ENCODE measurements at regions of chr22 and their contacts with region 1.

Region 1: DNA sequence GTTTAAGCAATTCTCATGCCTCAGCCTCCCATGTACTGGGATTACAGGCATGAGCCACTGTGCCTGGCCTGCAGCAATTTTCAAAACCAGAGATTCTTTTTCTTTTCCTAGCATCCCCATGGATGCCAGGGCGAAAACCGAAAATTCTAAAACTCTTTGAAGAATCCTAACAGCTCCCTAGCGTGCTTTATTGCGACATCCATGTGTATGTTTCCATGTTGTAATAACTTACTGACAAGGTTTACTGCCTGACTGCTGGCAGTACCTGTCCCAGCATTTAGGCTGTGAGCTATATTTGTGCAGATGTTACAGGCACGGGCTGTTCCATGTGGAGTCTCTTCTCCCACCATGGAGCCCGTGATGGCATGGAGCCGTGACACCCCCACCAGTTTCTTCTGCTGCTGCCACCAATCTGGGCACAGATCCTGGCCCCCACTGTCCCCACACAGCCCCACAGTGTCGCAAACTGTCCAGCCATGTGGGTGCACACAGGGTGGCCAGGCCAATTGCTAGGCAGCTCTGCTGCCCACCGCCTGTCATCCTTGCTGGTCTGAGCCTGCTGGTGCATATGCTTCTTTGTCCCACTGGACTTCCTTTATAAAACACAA is 7.1 kb upstream of the TAB1 start:
- DNase-seq: no peak
- H3K4me3 ChIP-seq: no peak overlapping the region
- H3K27ac ChIP-seq: no peak overlapping the region
- H3K4me1 ChIP-seq: peaks cover 9% of the 10 kb centered on the region
- H3K27me3 ChIP-seq: no peaks in the 10 kb centered on the region
- CTCF ChIP-seq: no peak
- POLR2A ChIP-seq: no peak

Region 2: GRCh38 chr22:39117585-39118191 is 274.8 kb before region 1 on chr22:
- intact Hi-C with region 1: no loop called
- DNase-seq: no peak
- H3K4me3 ChIP-seq: no peak overlapping the region
- H3K27ac ChIP-seq: no peak overlapping the region
- H3K4me1 ChIP-seq: no peaks in the 10 kb centered on the region
- H3K27me3 ChIP-seq: no peaks in the 10 kb centered on the region
- CTCF ChIP-seq: peak in 1 of 3 experiments; percentile 41
- POLR2A ChIP-seq: no peak

Region 3: DNA sequence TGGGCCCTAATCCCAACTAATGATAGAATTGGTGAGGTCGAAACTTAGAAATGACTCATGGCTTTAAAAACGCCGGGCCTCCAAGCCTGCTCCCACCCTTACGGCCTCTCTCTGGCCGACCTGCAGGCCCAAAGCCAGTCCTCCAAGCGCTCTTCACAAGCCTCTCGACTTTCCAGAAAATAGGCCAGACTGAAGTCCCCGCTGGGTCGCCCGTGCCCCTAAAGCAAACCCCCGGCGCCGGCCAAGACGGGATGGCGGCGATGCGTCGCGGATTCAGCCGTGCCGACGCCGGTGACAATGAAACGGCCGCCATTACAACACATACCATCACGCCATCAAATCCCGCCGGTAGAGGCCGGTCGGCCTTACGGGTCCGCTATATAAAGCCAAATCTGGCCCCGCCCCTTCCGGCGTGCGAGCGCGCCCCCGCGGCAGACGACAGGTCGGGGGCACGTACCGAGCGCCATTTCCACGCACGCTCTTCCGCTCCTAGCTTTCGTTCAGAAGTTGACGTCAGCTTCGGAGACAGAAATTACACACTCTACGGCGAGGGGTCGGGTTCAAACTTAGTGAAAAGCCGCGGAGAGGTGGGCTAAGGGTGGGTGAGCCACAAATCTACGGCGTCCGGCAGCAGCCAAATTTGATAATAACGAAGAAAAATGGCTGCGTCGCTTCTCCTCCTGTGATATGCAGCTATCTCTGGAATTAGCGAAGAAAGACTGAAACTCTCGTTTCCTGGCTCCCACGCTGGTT is 73.0 kb before region 1 on chr22 and contains the start of gene RPL3:
- intact Hi-C with region 1: loop called (anchors 10 kb)
- DNase-seq: peak in 1 of 2 donors; percentile 98
- H3K4me3 ChIP-seq: peak within 1 kb of the TSS; percentile 82 to 90
- H3K27ac ChIP-seq: peak within 1 kb of the TSS; percentile 98
- H3K4me1 ChIP-seq: peaks cover 48% of the 10 kb centered on the region
- H3K27me3 ChIP-seq: no peaks in the 10 kb centered on the region
- CTCF ChIP-seq: peak in 2 of 3 experiments; percentile 16
- POLR2A ChIP-seq: peak in 1 of 2 donors; percentile 80
- total RNA-seq, gene RPL3: 2,613 TPM

Region 4: GRCh38 chr22:39343259-39344048 is 49.0 kb before region 1 on chr22:
- intact Hi-C with region 1: no loop called
- DNase-seq: no peak
- H3K4me3 ChIP-seq: no peak overlapping the region
- H3K27ac ChIP-seq: no peak overlapping the region
- H3K4me1 ChIP-seq: no peaks in the 10 kb centered on the region
- H3K27me3 ChIP-seq: no peaks in the 10 kb centered on the region
- CTCF ChIP-seq: peak in 2 of 3 experiments; percentile 39 to 50
- POLR2A ChIP-seq: no peak

Region 5: GRCh38 chr22:40031766-40032470 is 639.5 kb after region 1 on chr22:
- intact Hi-C with region 1: loop called (anchors 5 kb)
- DNase-seq: no peak
- H3K4me3 ChIP-seq: no peak overlapping the region
- H3K27ac ChIP-seq: no peak overlapping the region
- H3K4me1 ChIP-seq: peaks cover 10% of the 10 kb centered on the region
- H3K27me3 ChIP-seq: no peaks in the 10 kb centered on the region
- CTCF ChIP-seq: no peak
- POLR2A ChIP-seq: no peak